PC-9 (cell line): ENCODE measurements at regions of chr2 and their contacts with region 1.

Region 1: GRCh38 chr2:152740743-152741328 is 22.4 kb downstream of the ARL6IP6 start:
- DNase-seq: peak in 1 of 2 experiments; percentile 62
- H3K4me3 ChIP-seq: no peak overlapping the region
- H3K27ac ChIP-seq: no peak overlapping the region
- H3K4me1 ChIP-seq: no peaks in the 10 kb centered on the region
- H3K27me3 ChIP-seq: no peaks in the 10 kb centered on the region
- CTCF ChIP-seq: peak; percentile 90

Region 2: GRCh38 chr2:152175458-152176325 is 565.1 kb before region 1 on chr2 and contains the start of gene STAM2:
- CTCF ChIA-PET with region 1: no interaction called
- POLR2A ChIA-PET with region 1: no interaction called
- intact Hi-C with region 1: loop called (anchors 2 kb)
- DNase-seq: peak; percentile 80 to 94
- H3K4me3 ChIP-seq: peak within 1 kb of the TSS; percentile 83
- H3K27ac ChIP-seq: peak within 1 kb of the TSS; percentile 84
- H3K4me1 ChIP-seq: peaks cover 22% of the 10 kb centered on the region
- H3K27me3 ChIP-seq: no peaks in the 10 kb centered on the region
- CTCF ChIP-seq: peak; percentile 95
- total RNA-seq, gene STAM2: 14.6 and 16.0 TPM in 2 replicates

Region 3: GRCh38 chr2:152693033-152693432 is 47.8 kb before region 1 on chr2:
- CTCF ChIA-PET with region 1: no interaction called
- POLR2A ChIA-PET with region 1: no interaction called
- intact Hi-C with region 1: no loop called
- DNase-seq: no peak
- H3K4me3 ChIP-seq: no peak overlapping the region
- H3K27ac ChIP-seq: no peak overlapping the region
- H3K4me1 ChIP-seq: no peaks in the 10 kb centered on the region
- H3K27me3 ChIP-seq: no peaks in the 10 kb centered on the region
- CTCF ChIP-seq: no peak

Region 4: GRCh38 chr2:152762202-152762601 is 21.4 kb after region 1 on chr2:
- CTCF ChIA-PET with region 1: no interaction called
- POLR2A ChIA-PET with region 1: no interaction called
- intact Hi-C with region 1: no loop called
- DNase-seq: no peak
- H3K4me3 ChIP-seq: no peak overlapping the region
- H3K27ac ChIP-seq: no peak overlapping the region
- H3K4me1 ChIP-seq: no peaks in the 10 kb centered on the region
- H3K27me3 ChIP-seq: no peaks in the 10 kb centered on the region
- CTCF ChIP-seq: no peak

Region 5: DNA sequence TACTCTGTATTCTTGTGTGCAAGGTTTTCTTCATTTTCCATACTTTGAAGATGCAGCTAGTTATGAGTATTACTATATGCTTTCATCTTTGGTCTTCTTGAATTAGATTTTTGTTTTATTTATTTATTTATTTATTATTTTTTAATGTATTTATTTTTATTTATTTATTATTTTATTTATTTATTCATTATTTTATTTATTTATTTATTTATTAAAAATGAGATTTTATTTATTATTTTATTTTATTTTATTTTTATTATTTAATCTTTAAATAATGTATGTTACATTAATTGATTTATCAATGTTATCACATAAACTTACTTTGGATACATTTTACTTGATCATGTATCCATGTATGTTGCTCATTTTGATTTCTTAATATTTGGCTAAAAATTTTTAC is 998.6 kb after region 1 on chr2:
- CTCF ChIA-PET with region 1: interaction called, 10 read pairs
- POLR2A ChIA-PET with region 1: no interaction called
- intact Hi-C with region 1: no loop called
- DNase-seq: no peak
- H3K4me3 ChIP-seq: no peak overlapping the region
- H3K27ac ChIP-seq: no peak overlapping the region
- H3K4me1 ChIP-seq: no peaks in the 10 kb centered on the region
- H3K27me3 ChIP-seq: no peaks in the 10 kb centered on the region
- CTCF ChIP-seq: no peak